Activated CD4-positive, alpha-beta T cell treated with anti-CD3 and anti-CD28 coated beads, Interleukin-2, amount 10 ng/mL, durations not matched to agents 24 days and 14 days (primary cell): ENCODE measurements at regions of chr1 and their contacts with region 1.

Region 1: GRCh38 chr1:182614796-182615454 is 10.7 kb upstream of the RGS16 start:
- DNase-seq: peak; percentile 83
- H3K4me3 Mint-ChIP-seq: peak overlapping the region; percentile 70
- H3K27ac Mint-ChIP-seq: peak overlapping the region; percentile 94
- H3K4me1 Mint-ChIP-seq: peaks cover 62% of the 10 kb centered on the region
- H3K27me3 Mint-ChIP-seq: peaks cover 31% of the 10 kb centered on the region

Region 2: DNA sequence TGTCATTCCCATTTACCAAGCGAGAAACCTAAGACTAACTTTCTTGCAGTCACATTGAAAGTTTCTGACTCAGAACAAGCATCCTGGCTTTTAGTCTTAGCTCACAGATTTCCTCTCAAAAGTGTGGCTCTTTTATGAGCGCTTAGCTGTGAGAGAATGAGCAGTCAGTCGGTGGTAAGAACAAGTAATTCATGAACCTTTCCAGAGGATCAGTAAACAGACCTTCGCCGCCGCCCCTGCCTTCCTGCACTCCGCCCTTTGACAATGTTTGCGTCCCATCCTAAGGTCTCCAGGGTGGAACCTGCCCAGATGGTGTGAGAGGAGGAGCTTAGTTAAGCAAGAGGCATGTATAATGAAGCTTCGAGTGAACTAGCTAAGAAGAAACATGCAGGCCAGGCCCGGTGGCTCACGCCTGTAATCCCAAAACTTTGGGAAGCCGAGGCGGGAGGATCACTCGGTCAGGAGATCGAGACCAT is 365.7 kb before region 1 on chr1:
- intact Hi-C with region 1: loop called (anchors 5 kb)
- DNase-seq: peak; percentile 79
- H3K4me3 Mint-ChIP-seq: no peak overlapping the region
- H3K27ac Mint-ChIP-seq: peak overlapping the region; percentile 80
- H3K4me1 Mint-ChIP-seq: peaks cover 14% of the 10 kb centered on the region
- H3K27me3 Mint-ChIP-seq: no peaks in the 10 kb centered on the region

Region 3: DNA sequence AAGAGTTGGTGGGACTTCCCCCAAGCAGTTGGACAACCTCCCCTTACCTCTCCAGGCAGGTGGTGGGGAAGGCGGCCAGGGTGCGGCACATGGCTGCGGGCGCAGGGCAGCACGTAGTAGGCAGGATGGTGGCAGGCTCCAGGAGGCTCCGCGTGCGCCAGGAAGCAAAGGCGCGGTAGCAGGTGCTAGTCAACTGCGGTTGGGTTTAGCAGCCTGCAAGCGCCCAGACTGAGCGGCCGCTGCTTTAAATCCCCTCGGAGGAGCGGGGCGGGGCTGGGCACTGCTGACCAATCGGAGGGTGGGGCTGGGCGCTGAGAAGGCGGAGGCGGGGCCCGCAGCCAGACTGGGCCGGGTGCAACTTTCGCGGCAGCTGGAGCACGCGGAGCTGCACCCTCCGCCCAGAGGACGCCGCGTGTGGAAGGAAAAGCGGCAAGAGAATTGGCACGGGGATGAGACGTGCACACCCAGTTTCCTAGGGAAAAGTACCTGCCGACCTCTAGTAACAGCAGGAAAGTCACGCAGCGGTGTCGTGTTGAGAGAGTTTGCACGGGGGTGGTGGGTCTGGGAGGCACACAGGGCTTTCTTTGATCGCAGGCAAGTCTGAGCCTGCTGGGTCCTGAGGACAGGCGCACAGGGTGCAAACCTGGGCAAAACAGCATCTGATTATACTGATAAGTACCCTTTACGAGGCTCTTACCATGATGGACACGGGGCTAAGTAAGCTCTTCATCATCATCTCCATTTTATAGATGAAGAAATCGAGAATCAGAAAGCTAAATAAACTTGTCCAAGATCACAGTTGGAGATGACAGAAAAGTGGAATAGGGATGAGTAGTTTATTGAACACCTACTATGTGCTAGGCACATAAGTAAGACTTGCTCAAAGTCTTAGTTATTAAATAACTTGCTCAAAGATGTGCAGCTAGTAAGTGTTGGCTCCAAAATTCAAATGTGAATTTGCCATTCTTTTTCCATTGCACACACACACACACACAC is 10.5 kb before region 1 on chr1 and contains the start of gene RGS16:
- intact Hi-C with region 1: loop called (anchors 1 kb)
- DNase-seq: peak; percentile 98
- H3K4me3 Mint-ChIP-seq: no peak within 1 kb of the TSS
- H3K27ac Mint-ChIP-seq: no peak within 1 kb of the TSS
- H3K4me1 Mint-ChIP-seq: peaks cover 45% of the 10 kb centered on the region
- H3K27me3 Mint-ChIP-seq: peaks cover 2% of the 10 kb centered on the region
- total RNA-seq, gene RGS16: 94.3 and 94.7 TPM in 2 replicates

Region 4: GRCh38 chr1:182674346-182675246 is 59.7 kb after region 1 on chr1:
- intact Hi-C with region 1: loop called (anchors 5 kb)
- DNase-seq: no peak
- H3K4me3 Mint-ChIP-seq: no peak overlapping the region
- H3K27ac Mint-ChIP-seq: no peak overlapping the region
- H3K4me1 Mint-ChIP-seq: peaks cover 4% of the 10 kb centered on the region
- H3K27me3 Mint-ChIP-seq: peaks cover 32% of the 10 kb centered on the region

Region 5: DNA sequence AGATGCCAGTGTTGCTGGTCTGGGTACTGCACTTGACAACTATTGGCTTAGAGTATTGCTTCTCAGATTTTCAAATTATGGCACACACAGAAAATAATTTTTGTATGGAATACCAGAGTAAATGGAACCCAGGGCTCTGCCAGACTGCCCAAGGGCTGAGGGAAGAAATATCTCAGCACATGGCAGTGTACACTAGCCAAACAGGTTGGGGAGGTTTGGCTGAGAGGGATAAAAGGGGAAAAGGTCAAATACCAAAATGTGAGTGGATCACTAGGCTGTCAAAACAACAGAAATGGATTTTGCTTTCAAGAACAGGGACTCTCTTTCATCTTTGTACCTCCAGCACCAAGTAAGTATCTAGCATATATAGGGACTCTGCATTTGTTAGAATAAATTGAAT is 72.4 kb after region 1 on chr1:
- intact Hi-C with region 1: no loop called
- DNase-seq: no peak
- H3K4me3 Mint-ChIP-seq: no peak overlapping the region
- H3K27ac Mint-ChIP-seq: no peak overlapping the region
- H3K4me1 Mint-ChIP-seq: peaks cover 7% of the 10 kb centered on the region
- H3K27me3 Mint-ChIP-seq: peaks cover 18% of the 10 kb centered on the region

Region 6: DNA sequence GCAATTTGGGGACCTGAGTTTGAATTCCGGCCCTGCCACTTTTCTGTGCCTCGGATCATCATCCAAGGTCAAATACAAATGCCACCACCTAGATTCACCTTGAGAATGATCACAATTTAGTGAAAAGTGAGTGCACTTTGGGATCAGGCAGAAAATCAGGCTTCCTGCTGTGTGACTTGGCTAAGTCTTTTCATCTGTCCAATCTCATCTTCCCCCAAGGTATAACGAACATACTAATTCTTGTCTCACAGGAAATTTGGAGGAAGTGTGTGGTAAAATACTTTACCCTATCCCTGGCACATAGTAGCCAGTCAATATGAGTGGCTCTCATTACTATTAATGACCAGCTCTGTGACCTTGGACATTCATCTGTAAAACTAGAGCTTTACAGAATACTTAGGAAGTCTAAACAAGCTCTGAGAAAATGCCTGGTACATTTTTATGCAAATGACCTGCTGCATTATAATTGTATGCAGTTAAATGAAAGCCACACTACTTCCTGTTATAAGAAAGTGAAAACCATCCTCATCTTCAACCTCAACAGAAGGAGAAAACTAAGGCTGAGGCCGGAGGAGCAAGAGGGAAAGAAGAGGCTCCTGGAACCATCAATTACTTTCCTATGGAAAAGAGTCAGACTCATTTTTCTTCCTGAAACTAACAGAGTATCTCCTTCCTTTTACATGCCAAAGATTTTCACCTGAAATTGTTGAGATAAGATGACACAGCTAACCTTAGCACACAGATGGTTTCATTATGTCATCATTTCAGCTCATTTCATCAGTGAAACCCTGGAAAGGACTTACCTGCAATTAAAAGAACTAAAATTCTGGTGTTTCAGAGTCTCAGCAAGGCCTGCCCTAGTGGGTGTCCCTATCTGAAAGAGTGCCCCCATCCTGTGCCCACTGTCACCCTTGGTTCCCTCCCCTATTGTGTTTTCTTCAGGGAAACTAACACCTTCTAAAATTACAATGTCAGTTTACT is 102.1 kb after region 1 on chr1:
- intact Hi-C with region 1: loop called (anchors 1 kb)
- DNase-seq: no peak
- H3K4me3 Mint-ChIP-seq: no peak overlapping the region
- H3K27ac Mint-ChIP-seq: peak overlapping the region; percentile 22
- H3K4me1 Mint-ChIP-seq: peaks cover 42% of the 10 kb centered on the region
- H3K27me3 Mint-ChIP-seq: no peaks in the 10 kb centered on the region